GM12878 (cell line): ENCODE measurements at regions of chr4 and their contacts with region 1.

Region 1: GRCh38 chr4:155787113-155787710 is 28.4 kb downstream of the GUCY1B1 start:
- DNase-seq: peak; percentile 19
- ATAC-seq: peak; percentile 97
- H3K4me3 ChIP-seq: no peak overlapping the region
- H3K27ac ChIP-seq: no peak overlapping the region
- H3K4me1 ChIP-seq: no peaks in the 10 kb centered on the region
- H3K27me3 ChIP-seq: no peaks in the 10 kb centered on the region
- CTCF ChIP-seq: peak; percentile 81 to 98 (median 90)
- EP300 ChIP-seq: no peak
- POLR2A ChIP-seq: no peak
- RAD21 ChIP-seq: peak; percentile 93

Region 2: DNA sequence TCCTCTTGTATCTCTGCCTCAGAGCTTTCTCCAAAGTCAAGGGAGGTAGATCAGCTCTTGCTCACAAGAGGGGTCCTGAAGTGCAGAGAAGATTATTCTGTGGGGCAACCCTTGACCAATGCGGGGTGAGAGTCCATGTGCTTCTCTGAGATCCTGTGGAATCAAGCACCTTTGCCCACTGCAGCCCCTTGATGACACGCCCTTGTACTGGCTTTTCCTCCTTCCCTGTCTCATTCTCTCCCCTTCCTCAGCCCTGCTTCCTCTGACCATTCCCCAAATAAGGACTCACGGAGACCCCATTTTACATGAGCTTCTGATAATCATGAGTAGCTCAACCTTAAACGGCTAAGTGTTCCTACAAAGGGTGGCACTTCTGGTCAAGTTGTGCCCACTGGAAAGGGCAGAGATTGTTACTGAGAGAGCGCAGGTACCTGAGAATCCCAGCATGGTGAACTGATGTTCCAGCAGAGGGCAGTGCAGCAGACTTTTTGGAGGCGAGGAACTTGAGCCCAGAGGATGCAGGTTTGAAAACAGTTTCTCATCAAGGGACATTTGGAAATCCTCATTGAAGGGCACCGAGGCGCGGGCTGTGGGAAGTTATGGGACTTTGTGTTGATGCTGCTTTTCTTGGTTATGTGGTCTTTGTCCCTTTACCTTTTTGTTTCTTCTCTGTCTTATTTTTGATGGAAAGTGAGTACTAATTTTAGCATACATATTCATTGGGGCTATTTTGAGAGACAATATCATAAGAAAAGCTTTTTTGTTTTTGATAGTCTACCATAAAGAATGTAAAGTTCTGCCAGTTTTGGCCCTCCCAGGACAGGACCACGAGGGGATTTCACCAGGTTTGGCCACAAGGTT is 804.8 kb before region 1 on chr4:
- CTCF ChIA-PET with region 1: no interaction called
- POLR2A ChIA-PET with region 1: no interaction called
- RAD21 ChIA-PET with region 1: no interaction called
- SMC1A ChIA-PET with region 1: no interaction called
- in situ Hi-C with region 1: loop called (anchors 25 kb)
- intact Hi-C with region 1: loop called (anchors 5 kb)
- DNase-seq: peak; percentile 15
- ATAC-seq: peak; percentile 86
- H3K4me3 ChIP-seq: no peak overlapping the region
- H3K27ac ChIP-seq: no peak overlapping the region
- H3K4me1 ChIP-seq: no peaks in the 10 kb centered on the region
- H3K27me3 ChIP-seq: no peaks in the 10 kb centered on the region
- CTCF ChIP-seq: peak; percentile 72 to 73 (median 72)
- EP300 ChIP-seq: no peak
- POLR2A ChIP-seq: no peak
- RAD21 ChIP-seq: peak; percentile 71

Region 3: GRCh38 chr4:155268821-155269220 is 518.4 kb before region 1 on chr4:
- CTCF ChIA-PET with region 1: no interaction called
- POLR2A ChIA-PET with region 1: no interaction called
- RAD21 ChIA-PET with region 1: no interaction called
- SMC1A ChIA-PET with region 1: no interaction called
- in situ Hi-C with region 1: no loop called
- intact Hi-C with region 1: no loop called
- DNase-seq: no peak
- ATAC-seq: no peak
- H3K4me3 ChIP-seq: no peak overlapping the region
- H3K27ac ChIP-seq: no peak overlapping the region
- H3K4me1 ChIP-seq: no peaks in the 10 kb centered on the region
- H3K27me3 ChIP-seq: no peaks in the 10 kb centered on the region
- CTCF ChIP-seq: no peak
- EP300 ChIP-seq: no peak
- POLR2A ChIP-seq: no peak
- RAD21 ChIP-seq: no peak

Region 4: GRCh38 chr4:155442267-155443105 is 344.7 kb before region 1 on chr4:
- CTCF ChIA-PET with region 1: interaction called, 60 read pairs
- POLR2A ChIA-PET with region 1: no interaction called
- RAD21 ChIA-PET with region 1: interaction called, 39 read pairs
- SMC1A ChIA-PET with region 1: interaction called, 34 read pairs
- in situ Hi-C with region 1: loop called (anchors 5 kb)
- intact Hi-C with region 1: loop called (anchors 1 kb)
- DNase-seq: no peak
- ATAC-seq: peak; percentile 89
- H3K4me3 ChIP-seq: no peak overlapping the region
- H3K27ac ChIP-seq: no peak overlapping the region
- H3K4me1 ChIP-seq: no peaks in the 10 kb centered on the region
- H3K27me3 ChIP-seq: no peaks in the 10 kb centered on the region; a peak in 1 of 4 replicates
- CTCF ChIP-seq: peak; percentile 83 to 87 (median 87)
- EP300 ChIP-seq: no peak
- POLR2A ChIP-seq: no peak
- RAD21 ChIP-seq: peak; percentile 85

Region 5: GRCh38 chr4:155657169-155657568 is 130.0 kb before region 1 on chr4:
- CTCF ChIA-PET with region 1: interaction called, 8 read pairs
- POLR2A ChIA-PET with region 1: no interaction called
- RAD21 ChIA-PET with region 1: interaction called, 20 read pairs
- SMC1A ChIA-PET with region 1: interaction called, 13 read pairs
- in situ Hi-C with region 1: no loop called
- intact Hi-C with region 1: no loop called
- DNase-seq: no peak
- ATAC-seq: no peak
- H3K4me3 ChIP-seq: no peak overlapping the region
- H3K27ac ChIP-seq: no peak overlapping the region
- H3K4me1 ChIP-seq: no peaks in the 10 kb centered on the region
- H3K27me3 ChIP-seq: 0 out of 4 replicates have a peak, but pooled peaks cover 0 to 2% of the 10 kb centered on the region in 2 experiments
- CTCF ChIP-seq: no peak
- EP300 ChIP-seq: no peak
- POLR2A ChIP-seq: no peak
- RAD21 ChIP-seq: no peak

Region 6: DNA sequence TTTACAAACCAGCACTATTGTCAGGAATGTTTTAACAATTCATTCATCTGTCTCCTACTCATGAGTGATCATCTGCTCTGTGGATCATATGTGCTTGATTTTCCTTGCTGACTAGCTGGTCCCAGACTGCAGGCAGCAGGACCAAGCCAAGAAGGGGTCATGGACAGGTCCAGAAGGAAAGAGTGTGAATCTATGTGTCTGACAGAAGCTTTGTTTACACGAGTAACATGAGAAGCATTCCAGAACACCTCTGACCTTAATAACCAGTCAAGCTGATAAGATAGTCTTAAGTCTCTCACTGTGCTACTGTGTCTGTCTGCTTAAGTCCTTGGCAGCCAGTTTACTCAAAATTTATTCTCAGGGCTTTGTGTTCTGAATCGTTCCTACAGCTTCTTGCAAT is 81.5 kb before region 1 on chr4:
- CTCF ChIA-PET with region 1: interaction called, 4 read pairs
- POLR2A ChIA-PET with region 1: no interaction called
- RAD21 ChIA-PET with region 1: interaction called, 5 read pairs
- SMC1A ChIA-PET with region 1: interaction called, 14 read pairs
- in situ Hi-C with region 1: no loop called
- intact Hi-C with region 1: no loop called
- DNase-seq: no peak
- ATAC-seq: no peak
- H3K4me3 ChIP-seq: no peak overlapping the region
- H3K27ac ChIP-seq: no peak overlapping the region
- H3K4me1 ChIP-seq: no peaks in the 10 kb centered on the region
- H3K27me3 ChIP-seq: no peaks in the 10 kb centered on the region
- CTCF ChIP-seq: no peak
- EP300 ChIP-seq: no peak
- POLR2A ChIP-seq: no peak
- RAD21 ChIP-seq: no peak

Region 7: DNA sequence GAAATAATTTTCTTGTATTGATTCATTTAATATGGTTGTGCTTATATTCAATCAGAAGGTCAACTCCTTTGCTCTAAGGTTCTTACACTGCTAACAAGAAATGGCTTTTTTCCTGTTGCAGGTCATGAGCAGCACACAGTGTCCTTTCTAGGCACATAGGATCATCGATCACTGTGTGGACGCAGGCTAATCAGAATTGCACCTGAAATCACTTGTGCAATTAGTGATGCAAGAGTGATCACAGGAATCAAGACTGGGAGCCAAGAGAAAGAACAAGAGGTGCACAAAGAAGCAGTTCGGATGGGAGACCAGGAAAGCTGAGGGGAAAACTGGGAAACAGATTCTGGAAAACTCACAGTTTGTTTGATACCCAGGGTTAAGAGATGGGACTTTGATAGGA is 137.4 kb after region 1 on chr4:
- CTCF ChIA-PET with region 1: no interaction called
- POLR2A ChIA-PET with region 1: no interaction called
- RAD21 ChIA-PET with region 1: no interaction called
- SMC1A ChIA-PET with region 1: no interaction called
- in situ Hi-C with region 1: no loop called
- intact Hi-C with region 1: no loop called
- DNase-seq: no peak
- ATAC-seq: no peak
- H3K4me3 ChIP-seq: no peak overlapping the region
- H3K27ac ChIP-seq: no peak overlapping the region
- H3K4me1 ChIP-seq: no peaks in the 10 kb centered on the region
- H3K27me3 ChIP-seq: no peaks in the 10 kb centered on the region
- CTCF ChIP-seq: no peak
- EP300 ChIP-seq: no peak
- POLR2A ChIP-seq: no peak
- RAD21 ChIP-seq: no peak

Region 8: GRCh38 chr4:156321203-156321602 is 534.0 kb after region 1 on chr4:
- CTCF ChIA-PET with region 1: no interaction called
- POLR2A ChIA-PET with region 1: no interaction called
- RAD21 ChIA-PET with region 1: no interaction called
- SMC1A ChIA-PET with region 1: no interaction called
- in situ Hi-C with region 1: no loop called
- intact Hi-C with region 1: no loop called
- DNase-seq: no peak
- ATAC-seq: no peak
- H3K4me3 ChIP-seq: no peak overlapping the region
- H3K27ac ChIP-seq: no peak overlapping the region
- H3K4me1 ChIP-seq: no peaks in the 10 kb centered on the region
- H3K27me3 ChIP-seq: no peaks in the 10 kb centered on the region
- CTCF ChIP-seq: no peak
- EP300 ChIP-seq: no peak
- POLR2A ChIP-seq: no peak
- RAD21 ChIP-seq: no peak